AG04449 (cell line): ENCODE measurements at regions of chr20 and their contacts with region 1.

Region 1: GRCh38 chr20:5191829-5192569 is 65.2 kb downstream of the CDS2 start:
- DNase-seq: no peak
- H3K4me3 ChIP-seq: no peak overlapping the region
- CTCF ChIP-seq: peak; percentile 63

Region 2: GRCh38 chr20:4937397-4938319 is 254.3 kb before region 1 on chr20:
- CTCF ChIA-PET with region 1: no interaction called
- POLR2A ChIA-PET with region 1: no interaction called
- DNase-seq: no peak
- H3K4me3 ChIP-seq: no peak overlapping the region
- CTCF ChIP-seq: no peak

Region 3: GRCh38 chr20:5056801-5057599 is 135.0 kb before region 1 on chr20:
- CTCF ChIA-PET with region 1: no interaction called
- POLR2A ChIA-PET with region 1: no interaction called
- DNase-seq: no peak
- H3K4me3 ChIP-seq: no peak overlapping the region
- CTCF ChIP-seq: peak; percentile 36

Region 4: GRCh38 chr20:5100684-5101347 is 91.2 kb before region 1 on chr20:
- CTCF ChIA-PET with region 1: interaction called, 24 read pairs
- POLR2A ChIA-PET with region 1: no interaction called
- DNase-seq: no peak
- H3K4me3 ChIP-seq: no peak overlapping the region
- CTCF ChIP-seq: peak; percentile 72

Region 5: GRCh38 chr20:5119435-5120188 is 72.4 kb before region 1 on chr20 and contains the start of gene PCNA:
- CTCF ChIA-PET with region 1: interaction called, 372 read pairs
- POLR2A ChIA-PET with region 1: no interaction called
- DNase-seq: peak; percentile 71
- H3K4me3 ChIP-seq: peak within 1 kb of the TSS; percentile 95
- CTCF ChIP-seq: no peak

Region 6: DNA sequence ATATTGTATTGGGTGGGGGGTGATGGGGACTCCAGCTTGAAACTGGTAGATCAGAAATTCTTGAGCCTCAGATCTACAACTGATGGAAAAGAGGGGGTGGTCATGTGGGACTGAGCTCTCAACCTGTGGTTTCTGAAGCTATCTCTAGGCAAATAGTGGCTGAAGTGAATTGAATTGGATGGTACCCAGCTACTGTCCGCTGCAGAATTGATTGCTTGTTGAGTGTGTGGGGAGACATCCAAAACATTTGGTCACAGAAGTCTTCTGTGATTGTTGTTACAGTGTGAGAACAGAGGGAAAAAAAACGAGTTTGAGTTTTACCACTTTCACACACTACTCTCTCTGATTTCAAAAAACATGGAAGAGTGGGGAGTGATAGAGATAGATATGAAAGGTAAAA is 50.4 kb before region 1 on chr20:
- CTCF ChIA-PET with region 1: interaction called, 13 read pairs
- POLR2A ChIA-PET with region 1: no interaction called
- DNase-seq: no peak
- H3K4me3 ChIP-seq: no peak overlapping the region
- CTCF ChIP-seq: no peak

Region 7: DNA sequence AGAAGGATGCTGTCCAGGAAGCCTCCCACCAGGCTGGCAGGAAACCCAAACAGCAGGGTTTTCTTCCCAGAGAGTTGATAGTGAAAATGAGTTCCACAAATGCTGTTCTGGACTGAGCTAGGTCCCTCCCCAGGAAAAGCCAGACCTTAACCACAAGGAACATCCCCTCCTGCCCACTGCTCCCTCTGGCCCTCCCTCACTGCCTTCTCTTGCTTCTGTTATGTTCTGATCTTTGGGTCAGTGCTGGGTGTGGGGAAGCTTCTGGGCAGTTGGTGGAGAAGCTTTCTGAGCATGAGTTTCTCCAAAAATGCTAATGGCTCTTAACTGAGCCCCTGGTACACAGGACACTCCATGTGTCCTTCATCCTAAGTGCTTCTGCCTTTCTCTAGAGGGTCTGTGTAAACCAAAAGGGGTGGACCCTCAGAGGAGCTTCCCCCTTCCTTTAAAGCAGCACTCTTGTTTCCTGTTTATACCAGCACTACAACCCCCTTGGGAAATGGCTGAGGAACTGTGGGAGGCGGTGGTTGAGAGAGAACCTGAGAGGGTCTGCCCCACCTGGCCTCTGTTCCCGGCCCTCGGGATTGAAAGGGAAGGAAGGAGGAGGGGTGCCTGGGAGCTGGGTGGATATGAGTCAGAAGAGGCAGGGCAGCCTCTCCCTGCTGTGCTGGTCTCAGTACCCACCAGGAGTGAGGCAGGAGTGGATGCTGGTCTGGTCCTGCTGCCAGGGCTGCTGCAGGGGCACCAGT is 23.2 kb before region 1 on chr20:
- CTCF ChIA-PET with region 1: interaction called, 15 read pairs
- POLR2A ChIA-PET with region 1: no interaction called
- DNase-seq: no peak
- H3K4me3 ChIP-seq: no peak overlapping the region
- CTCF ChIP-seq: no peak

Region 8: GRCh38 chr20:5205348-5206210 is 13.6 kb after region 1 on chr20:
- CTCF ChIA-PET with region 1: interaction called, 104 read pairs
- POLR2A ChIA-PET with region 1: no interaction called
- DNase-seq: no peak
- H3K4me3 ChIP-seq: no peak overlapping the region
- CTCF ChIP-seq: peak; percentile 95

Region 9: GRCh38 chr20:5222919-5223634 is 31.1 kb after region 1 on chr20:
- CTCF ChIA-PET with region 1: interaction called, 12 read pairs
- POLR2A ChIA-PET with region 1: no interaction called
- DNase-seq: peak; percentile 4
- H3K4me3 ChIP-seq: no peak overlapping the region
- CTCF ChIP-seq: peak; percentile 88

Region 10: DNA sequence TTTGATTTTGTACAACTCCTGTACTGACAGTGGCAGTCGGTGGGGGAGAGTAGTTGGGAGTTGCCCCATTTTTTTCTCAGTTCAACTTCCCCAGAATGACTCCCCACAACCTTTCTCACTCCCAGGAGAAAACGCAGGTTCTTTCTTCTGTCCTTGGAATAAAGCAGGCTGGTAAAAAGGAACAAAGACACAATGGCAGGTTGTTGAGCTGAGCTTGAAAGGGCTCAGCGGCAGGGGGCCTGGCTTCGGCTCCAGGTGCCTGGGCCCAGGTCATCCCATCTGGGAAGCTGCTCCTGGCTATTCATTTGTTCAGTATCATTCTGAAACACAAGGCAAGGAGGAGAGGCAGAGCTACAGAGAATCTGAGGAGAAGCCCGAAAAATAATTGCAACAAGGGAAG is 78.6 kb after region 1 on chr20:
- CTCF ChIA-PET with region 1: no interaction called
- POLR2A ChIA-PET with region 1: no interaction called
- DNase-seq: no peak
- H3K4me3 ChIP-seq: no peak overlapping the region
- CTCF ChIP-seq: no peak